ENCODE measurements at regions of chr19 and their contacts with region 1.

Region 1: DNA sequence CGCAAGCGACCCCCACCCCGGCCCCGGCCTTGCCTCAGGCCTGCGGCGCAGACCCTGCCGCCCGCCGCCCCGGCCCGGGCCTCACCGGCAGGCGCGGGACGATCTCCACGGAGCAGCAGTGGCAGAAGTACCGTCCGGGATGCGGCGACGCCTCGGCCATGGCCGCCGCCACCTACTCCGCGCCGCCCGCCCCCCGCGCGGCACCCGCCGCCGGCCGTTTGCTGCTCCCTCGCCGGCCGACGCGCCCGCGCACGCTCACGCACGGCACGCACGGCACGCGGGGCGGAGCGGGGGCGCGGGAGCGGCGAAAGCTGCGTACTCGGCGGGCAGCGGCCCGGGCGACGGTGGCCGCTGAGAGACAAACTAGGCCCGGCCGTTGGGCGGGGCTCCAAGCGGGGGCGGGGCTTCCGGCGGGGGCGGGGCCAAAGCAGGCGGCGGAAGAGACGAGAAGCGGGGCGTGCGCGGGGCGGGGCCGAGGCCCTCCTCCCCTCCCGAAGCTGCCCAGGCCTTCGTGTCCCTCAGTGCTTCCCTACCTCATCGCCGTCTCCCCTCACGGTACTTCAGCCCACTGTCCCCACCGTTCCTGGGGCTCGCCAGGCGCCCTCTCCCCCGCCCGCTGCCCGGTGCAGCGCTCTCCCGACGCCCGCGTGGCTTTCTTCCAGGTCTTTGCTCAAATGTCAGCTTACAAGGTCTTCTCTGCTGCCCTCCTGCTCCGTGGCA is at the start of gene RNF126:
- DNase-seq: peak; percentile 91 to 97 (median 94)
- ATAC-seq: peak; percentile 48
- H3K4me3 ChIP-seq: peak within 1 kb of the TSS; percentile 67 to 70
- H3K4me3 Mint-ChIP-seq: peak within 1 kb of the TSS; percentile 96
- H3K27ac ChIP-seq: peak within 1 kb of the TSS; percentile 81 to 94
- H3K27ac Mint-ChIP-seq: peak within 1 kb of the TSS; percentile 99
- H3K4me1 ChIP-seq: peaks cover 45% of the 10 kb centered on the region
- H3K4me1 Mint-ChIP-seq: peaks cover 38% of the 10 kb centered on the region
- H3K27me3 ChIP-seq: peaks cover 0 to 2% of the 10 kb centered on the region in 2 experiments
- H3K27me3 Mint-ChIP-seq: no peaks in the 10 kb centered on the region
- CTCF ChIP-seq: no peak
- total RNA-seq, gene RNF126: 99.7 to 107 TPM

Region 2: DNA sequence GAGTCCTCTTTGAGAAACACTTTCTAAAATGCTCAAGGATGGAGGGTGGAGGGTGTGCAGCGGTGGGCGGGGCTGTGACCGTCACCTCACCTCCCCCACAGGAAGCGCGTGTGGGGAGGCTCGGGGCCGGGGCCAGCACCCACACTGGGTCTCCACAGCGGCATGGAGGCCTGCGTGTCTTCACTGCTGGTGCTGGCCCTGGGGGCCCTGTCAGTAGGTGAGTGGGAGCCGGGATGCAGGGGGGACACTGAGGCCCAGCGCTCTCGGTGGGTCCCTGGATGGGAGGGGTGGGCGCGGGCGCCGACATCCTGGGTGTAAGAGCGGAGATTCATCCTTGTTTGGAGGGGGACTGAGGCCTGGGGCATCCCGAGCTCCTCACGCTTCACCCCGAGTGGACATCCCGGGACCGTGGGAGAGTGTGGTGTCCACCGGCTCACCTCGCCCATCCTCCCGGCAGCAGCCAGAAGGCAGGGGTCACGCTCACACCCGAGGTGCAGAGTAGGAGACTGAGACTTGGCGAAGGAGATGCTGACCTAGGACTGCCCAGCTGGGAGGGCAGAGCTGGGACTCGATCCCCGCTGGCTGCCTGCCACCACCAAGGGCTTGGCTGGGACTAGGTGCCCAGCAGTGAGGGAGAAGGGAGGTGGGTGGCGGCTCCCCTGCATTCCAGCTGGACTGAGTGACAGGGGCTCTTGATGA is 119.1 kb before region 1 on chr19 and contains the start of gene GZMM:
- CTCF ChIA-PET with region 1: no interaction called
- POLR2A ChIA-PET with region 1: interaction called, 5 read pairs
- intact Hi-C with region 1: loop called in 1 of 2 experiments (anchors 1 kb)
- DNase-seq: peak; percentile 66 to 95 (median 84)
- ATAC-seq: peak; percentile 94
- H3K4me3 ChIP-seq: peak within 1 kb of the TSS; percentile 94 to 99
- H3K4me3 Mint-ChIP-seq: peak within 1 kb of the TSS; percentile 92
- H3K27ac ChIP-seq: peak within 1 kb of the TSS; percentile 90 to 91
- H3K27ac Mint-ChIP-seq: peak within 1 kb of the TSS; percentile 94
- H3K4me1 ChIP-seq: peaks cover 20% of the 10 kb centered on the region
- H3K4me1 Mint-ChIP-seq: peaks cover 24% of the 10 kb centered on the region
- H3K27me3 ChIP-seq: no peaks in the 10 kb centered on the region
- H3K27me3 Mint-ChIP-seq: no peaks in the 10 kb centered on the region
- CTCF ChIP-seq: no peak
- total RNA-seq, gene GZMM: 117 to 119 TPM

Region 3: GRCh38 chr19:633068-633785 is 29.9 kb before region 1 on chr19 and contains the start of gene POLRMT:
- CTCF ChIA-PET with region 1: interaction called, 3 read pairs
- POLR2A ChIA-PET with region 1: interaction called, 6 read pairs
- intact Hi-C with region 1: loop called (anchors 1 kb)
- DNase-seq: peak; percentile 88 to 99 (median 95)
- ATAC-seq: peak; percentile 95
- H3K4me3 ChIP-seq: peak within 1 kb of the TSS; percentile 89 to 93
- H3K4me3 Mint-ChIP-seq: peak within 1 kb of the TSS; percentile 95
- H3K27ac ChIP-seq: peak within 1 kb of the TSS; percentile 61 to 72
- H3K27ac Mint-ChIP-seq: peak within 1 kb of the TSS; percentile 94
- H3K4me1 ChIP-seq: peaks cover 22% of the 10 kb centered on the region
- H3K4me1 Mint-ChIP-seq: peaks cover 30% of the 10 kb centered on the region
- H3K27me3 ChIP-seq: no peaks in the 10 kb centered on the region
- H3K27me3 Mint-ChIP-seq: no peaks in the 10 kb centered on the region
- CTCF ChIP-seq: no peak
- total RNA-seq, gene POLRMT: 48.6 to 53.7 TPM

Region 4: DNA sequence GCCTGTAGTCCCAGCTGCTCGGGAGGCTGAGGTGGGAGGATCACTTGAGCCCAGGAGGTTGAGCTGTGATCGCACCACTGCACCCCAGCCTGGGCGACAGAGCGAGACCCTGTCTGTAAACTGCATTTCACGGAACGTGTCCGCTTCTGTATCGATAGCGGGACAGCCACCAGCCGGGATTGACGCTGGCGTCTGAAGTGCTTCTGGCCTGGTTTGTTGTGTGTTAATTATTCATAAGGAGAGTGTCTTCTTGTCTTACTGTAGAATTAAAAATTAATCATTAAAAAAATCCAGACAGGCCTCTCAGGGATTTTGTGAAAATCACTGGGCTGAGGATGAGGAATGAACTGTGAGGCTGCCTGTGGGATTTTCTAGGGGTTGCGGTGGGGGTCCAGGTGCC is 71.6 kb after region 1 on chr19:
- CTCF ChIA-PET with region 1: interaction called, 6 read pairs
- POLR2A ChIA-PET with region 1: no interaction called
- intact Hi-C with region 1: loop called in 1 of 2 experiments (anchors 1 kb)
- DNase-seq: peak in 1 of 9 experiments; percentile 9
- ATAC-seq: no peak
- H3K4me3 ChIP-seq: no peak overlapping the region
- H3K4me3 Mint-ChIP-seq: no peak overlapping the region
- H3K27ac ChIP-seq: no peak overlapping the region
- H3K27ac Mint-ChIP-seq: no peak overlapping the region
- H3K4me1 ChIP-seq: no peaks in the 10 kb centered on the region
- H3K4me1 Mint-ChIP-seq: peaks cover 3% of the 10 kb centered on the region
- H3K27me3 ChIP-seq: no peaks in the 10 kb centered on the region
- H3K27me3 Mint-ChIP-seq: peaks cover 3% of the 10 kb centered on the region
- CTCF ChIP-seq: no peak

Region 5: GRCh38 chr19:1275260-1275975 is 612.3 kb after region 1 on chr19 and contains the start of gene FAM174C:
- CTCF ChIA-PET with region 1: no interaction called
- POLR2A ChIA-PET with region 1: no interaction called
- intact Hi-C with region 1: loop called in 1 of 2 experiments (anchors 5 kb)
- DNase-seq: peak; percentile 88 to 99 (median 95)
- ATAC-seq: peak; percentile 75
- H3K4me3 ChIP-seq: peak within 1 kb of the TSS; percentile 77 to 79
- H3K4me3 Mint-ChIP-seq: peak within 1 kb of the TSS; percentile 83
- H3K27ac ChIP-seq: peak within 1 kb of the TSS; percentile 84 to 94
- H3K27ac Mint-ChIP-seq: peak within 1 kb of the TSS; percentile 92
- H3K4me1 ChIP-seq: peaks cover 61% of the 10 kb centered on the region
- H3K4me1 Mint-ChIP-seq: peaks cover 52% of the 10 kb centered on the region
- H3K27me3 ChIP-seq: no peaks in the 10 kb centered on the region
- H3K27me3 Mint-ChIP-seq: no peaks in the 10 kb centered on the region
- CTCF ChIP-seq: no peak
- total RNA-seq, gene FAM174C: 36.2 to 37.4 TPM